ENCODE measurements at regions of chr9 and their contacts with region 1.

Region 1: DNA sequence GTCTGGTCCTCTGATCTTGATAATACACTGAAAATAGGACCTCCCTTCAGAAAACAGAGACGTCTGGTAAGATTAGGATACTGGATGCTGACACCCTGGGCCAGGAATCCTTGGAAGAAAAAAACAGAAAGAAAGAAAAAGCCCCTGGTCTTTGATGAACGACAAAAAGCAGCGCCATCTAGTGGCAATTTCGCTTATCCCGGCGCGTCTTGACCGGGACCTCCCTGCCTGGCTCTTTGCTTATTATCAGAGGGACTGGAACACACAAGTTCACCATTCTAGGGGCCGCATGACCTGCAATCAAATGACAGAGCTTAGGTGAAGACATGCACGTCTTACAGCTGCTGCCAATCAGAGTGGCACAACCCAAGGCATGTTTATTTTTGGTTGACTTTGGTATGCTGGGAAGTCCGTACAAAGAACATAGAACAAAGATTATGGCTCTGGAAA is 114.9 kb upstream of the NFIB start:
- DNase-seq: peak; percentile 37 to 49
- H3K4me3 ChIP-seq: no peak overlapping the region
- H3K27ac ChIP-seq: no peak overlapping the region
- H3K4me1 ChIP-seq: peaks cover 16% of the 10 kb centered on the region; the same call in 1 of the 2 replicates
- H3K27me3 ChIP-seq: no peaks in the 10 kb centered on the region
- CTCF ChIP-seq: peak; percentile 78

Region 2: GRCh38 chr9:13088720-13089427 is 1339.9 kb before region 1 on chr9:
- CTCF ChIA-PET with region 1: no interaction called
- POLR2A ChIA-PET with region 1: no interaction called
- intact Hi-C with region 1: loop called (anchors 5 kb)
- DNase-seq: peak in 1 of 2 experiments; percentile 5
- H3K4me3 ChIP-seq: no peak overlapping the region; the same call in 1 of the 2 replicates
- H3K27ac ChIP-seq: no peak overlapping the region
- H3K4me1 ChIP-seq: peaks cover 9% of the 10 kb centered on the region
- H3K27me3 ChIP-seq: no peaks in the 10 kb centered on the region
- CTCF ChIP-seq: peak; percentile 78

Region 3: DNA sequence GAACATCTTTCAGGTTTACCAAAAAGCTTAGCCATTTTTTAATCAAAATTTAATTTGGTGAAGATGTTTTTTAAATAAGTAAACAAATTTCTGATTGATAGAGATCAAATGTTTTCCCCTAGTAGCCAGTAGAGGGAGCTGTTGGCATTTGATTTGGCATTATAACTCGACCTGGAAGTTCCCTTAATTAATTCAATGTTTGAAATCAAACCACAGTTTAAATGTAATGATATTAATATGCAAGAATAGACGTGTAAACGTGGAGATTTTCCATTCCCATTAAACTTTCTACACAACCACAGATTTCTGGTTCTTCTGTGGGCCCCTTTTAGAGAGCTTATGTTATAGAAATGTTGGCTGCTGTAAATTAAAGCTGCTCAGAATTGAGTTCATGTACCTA is 1001.2 kb before region 1 on chr9:
- CTCF ChIA-PET with region 1: interaction called, 4 read pairs
- POLR2A ChIA-PET with region 1: no interaction called
- intact Hi-C with region 1: loop called (anchors 2 kb)
- DNase-seq: peak in 1 of 2 experiments; percentile 5
- H3K4me3 ChIP-seq: no peak overlapping the region
- H3K27ac ChIP-seq: no peak overlapping the region
- H3K4me1 ChIP-seq: no peaks in the 10 kb centered on the region
- H3K27me3 ChIP-seq: no peaks in the 10 kb centered on the region
- CTCF ChIP-seq: peak; percentile 80

Region 4: DNA sequence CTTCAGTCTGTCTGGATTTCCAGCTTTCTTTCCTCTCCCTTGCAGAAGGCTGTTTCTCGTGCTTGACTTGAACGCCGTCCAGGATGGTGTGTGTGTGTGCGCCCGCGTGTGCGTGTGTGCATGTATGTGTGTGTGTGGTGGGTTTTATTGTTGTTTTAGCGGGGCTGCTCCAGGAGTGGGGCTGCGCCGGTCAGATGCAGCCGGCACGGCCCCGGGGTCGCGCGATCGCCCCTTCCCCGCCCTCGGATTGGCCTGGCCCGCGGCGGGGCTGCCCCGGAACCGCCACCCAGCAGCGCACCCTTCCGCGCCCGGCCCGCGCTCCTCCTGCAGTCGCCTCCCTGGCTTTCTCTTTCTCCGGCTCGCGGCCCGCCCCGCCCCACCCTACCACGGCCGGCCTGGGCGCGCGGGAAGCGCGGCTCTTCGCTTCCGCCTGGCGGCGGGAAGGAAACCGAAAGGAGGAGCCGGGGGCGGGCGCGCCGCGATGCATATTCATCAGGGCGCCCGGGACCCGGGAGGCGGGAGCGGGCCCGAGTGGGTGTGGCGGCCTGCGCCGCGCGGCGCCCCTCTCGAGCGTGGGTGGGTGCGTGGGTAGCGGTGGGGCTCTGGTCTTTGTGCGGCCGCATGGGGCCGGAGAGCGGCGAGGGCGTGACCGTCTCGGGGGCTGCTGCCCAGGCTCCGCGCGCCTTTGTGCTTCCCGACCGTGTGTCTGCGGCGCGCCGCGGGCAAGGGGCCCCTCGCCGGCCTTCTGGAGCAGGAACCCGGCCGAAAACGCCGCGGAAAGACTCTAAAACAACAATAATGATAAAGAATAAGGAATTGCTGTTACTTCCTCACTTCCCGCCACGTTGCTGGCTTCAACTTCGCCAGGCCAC is 106.4 kb before region 1 on chr9:
- CTCF ChIA-PET with region 1: no interaction called
- POLR2A ChIA-PET with region 1: no interaction called
- intact Hi-C with region 1: loop called (anchors 10 kb)
- DNase-seq: peak; percentile 72 to 85
- H3K4me3 ChIP-seq: peak overlapping the region; percentile 73
- H3K27ac ChIP-seq: peak overlapping the region; percentile 92
- H3K4me1 ChIP-seq: peaks cover 59% of the 10 kb centered on the region
- H3K27me3 ChIP-seq: no peaks in the 10 kb centered on the region
- CTCF ChIP-seq: no peak; the same call in 1 of the 2 replicates

Region 5: GRCh38 chr9:14451949-14452348 is 23.1 kb after region 1 on chr9:
- CTCF ChIA-PET with region 1: no interaction called
- POLR2A ChIA-PET with region 1: no interaction called
- intact Hi-C with region 1: no loop called
- DNase-seq: no peak
- H3K4me3 ChIP-seq: no peak overlapping the region
- H3K27ac ChIP-seq: no peak overlapping the region
- H3K4me1 ChIP-seq: no peaks in the 10 kb centered on the region
- H3K27me3 ChIP-seq: no peaks in the 10 kb centered on the region
- CTCF ChIP-seq: no peak